HepG2 (cell line): ENCODE measurements at regions of chr9 and their contacts with region 1.

Region 1: DNA sequence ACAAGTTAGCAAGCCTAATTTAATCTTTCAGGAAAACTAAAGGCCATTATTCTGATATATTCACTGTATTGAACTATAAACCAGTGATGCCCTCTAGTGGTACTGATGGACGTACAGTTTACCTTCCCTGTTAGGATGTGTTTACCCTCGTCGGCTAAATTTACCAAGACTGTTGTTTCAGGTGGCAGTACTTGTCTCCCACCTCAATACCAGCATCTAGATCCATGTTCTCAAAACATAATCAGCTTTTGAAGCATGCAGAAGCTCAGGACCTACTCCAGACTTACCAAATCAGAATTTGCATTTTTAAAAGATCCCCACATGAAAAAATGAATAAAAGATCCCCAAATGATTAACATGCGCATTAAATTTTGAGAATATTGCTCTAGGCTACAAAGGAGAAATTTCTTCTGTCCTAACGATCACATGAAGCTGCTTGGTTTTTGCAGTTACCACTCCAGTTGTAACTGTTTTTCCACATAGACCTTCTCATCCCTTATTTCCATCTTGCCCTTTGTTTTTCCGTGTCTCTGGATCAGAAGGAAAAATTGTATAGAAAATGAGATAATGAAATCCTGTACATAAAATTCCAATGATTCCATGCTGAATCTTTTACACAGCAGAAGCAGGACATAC is 3.2 kb upstream of the BAAT start:
- DNase-seq: peak; percentile 86
- ATAC-seq: peak; percentile 97
- H3K4me3 ChIP-seq: no peak overlapping the region
- H3K27ac ChIP-seq: peak overlapping the region; percentile 41
- H3K4me1 ChIP-seq: peaks cover 81% of the 10 kb centered on the region
- H3K27me3 ChIP-seq: no peaks in the 10 kb centered on the region
- CTCF ChIP-seq: peak; percentile 88
- EP300 ChIP-seq: peak in 1 of 2 experiments; percentile 58; a peak in 1 of 4 replicates
- POLR2A ChIP-seq: no peak
- RAD21 ChIP-seq: peak; percentile 81

Region 2: GRCh38 chr9:100714372-100715099 is 673.5 kb before region 1 on chr9:
- CTCF ChIA-PET with region 1: no interaction called
- POLR2A ChIA-PET with region 1: no interaction called
- in situ Hi-C with region 1: no loop called
- intact Hi-C with region 1: loop called (anchors 1 kb)
- DNase-seq: peak; percentile 48
- ATAC-seq: peak; percentile 91
- H3K4me3 ChIP-seq: no peak overlapping the region
- H3K27ac ChIP-seq: no peak overlapping the region
- H3K4me1 ChIP-seq: no peaks in the 10 kb centered on the region
- H3K27me3 ChIP-seq: no peaks in the 10 kb centered on the region
- CTCF ChIP-seq: peak; percentile 82
- EP300 ChIP-seq: no peak
- POLR2A ChIP-seq: no peak
- RAD21 ChIP-seq: peak; percentile 37; the same call in 1 of the 2 replicates

Region 3: DNA sequence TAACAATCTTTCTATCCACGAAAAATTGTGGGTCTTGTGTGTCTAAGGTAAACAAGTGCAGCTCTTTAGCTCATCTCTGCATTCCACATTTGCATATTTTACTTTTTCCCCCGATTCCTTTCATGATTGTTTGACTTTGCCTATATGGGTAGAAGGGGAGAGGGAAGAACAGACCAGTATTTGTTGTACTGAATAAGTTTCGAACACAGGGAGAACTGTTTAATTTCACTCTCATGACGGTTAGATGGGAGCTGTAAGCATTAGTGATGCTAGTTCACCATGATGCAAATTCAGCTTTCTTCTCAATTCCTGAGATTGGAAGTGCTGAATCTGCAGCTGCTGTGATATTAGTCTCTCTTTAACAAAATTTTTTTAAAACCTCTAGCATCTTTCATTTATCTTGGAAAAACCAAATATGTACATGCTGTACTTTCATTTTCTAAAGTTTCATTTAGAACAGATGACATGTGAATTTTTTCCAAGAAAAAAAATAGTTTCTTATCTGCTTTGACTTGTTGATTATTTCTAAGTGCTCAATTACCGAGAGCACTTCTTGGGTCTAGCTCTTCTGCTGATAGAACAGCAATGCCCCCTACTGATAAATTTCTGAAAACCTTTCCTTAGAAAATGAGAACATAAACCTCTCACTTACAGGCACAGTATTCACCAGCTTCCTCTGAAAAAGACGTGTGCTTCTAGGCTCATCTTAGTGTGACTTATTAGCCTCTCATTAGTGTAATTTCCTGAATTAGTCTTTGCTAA is 152.7 kb before region 1 on chr9:
- CTCF ChIA-PET with region 1: interaction called, 4 read pairs
- POLR2A ChIA-PET with region 1: no interaction called
- in situ Hi-C with region 1: no loop called
- intact Hi-C with region 1: loop called (anchors 2 kb)
- DNase-seq: peak; percentile 45
- ATAC-seq: peak; percentile 81
- H3K4me3 ChIP-seq: no peak overlapping the region
- H3K27ac ChIP-seq: no peak overlapping the region
- H3K4me1 ChIP-seq: peaks cover 30% of the 10 kb centered on the region
- H3K27me3 ChIP-seq: no peaks in the 10 kb centered on the region
- CTCF ChIP-seq: peak; percentile 68
- EP300 ChIP-seq: no peak
- POLR2A ChIP-seq: no peak
- RAD21 ChIP-seq: peak; percentile 47

Region 4: DNA sequence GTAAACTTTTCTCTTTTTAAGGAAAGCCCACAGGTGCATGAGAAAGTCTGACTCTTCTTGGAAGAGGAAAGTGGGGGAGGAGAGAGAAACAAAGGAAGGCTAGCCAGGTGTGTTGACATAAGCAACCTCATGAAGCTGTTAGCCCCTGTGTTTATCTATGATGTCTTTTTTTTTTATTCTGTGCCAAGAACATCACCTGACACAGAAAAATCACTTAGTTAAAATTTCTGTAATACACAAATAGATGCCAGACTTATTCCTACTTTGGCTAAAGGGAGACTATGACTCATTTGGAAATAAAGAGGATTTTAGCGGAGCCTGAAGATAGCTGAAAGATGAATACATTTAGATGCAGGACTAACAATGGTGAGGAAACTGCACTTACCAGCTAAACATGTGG is 61.5 kb before region 1 on chr9:
- CTCF ChIA-PET with region 1: no interaction called
- POLR2A ChIA-PET with region 1: interaction called, 36 read pairs
- in situ Hi-C with region 1: loop called (anchors 5 kb)
- intact Hi-C with region 1: loop called (anchors 2 kb)
- DNase-seq: peak; percentile 16
- ATAC-seq: no peak
- H3K4me3 ChIP-seq: no peak overlapping the region
- H3K27ac ChIP-seq: peak overlapping the region; percentile 97
- H3K4me1 ChIP-seq: peaks cover 74% of the 10 kb centered on the region
- H3K27me3 ChIP-seq: no peaks in the 10 kb centered on the region
- CTCF ChIP-seq: no peak
- EP300 ChIP-seq: peak in 1 of 2 experiments; percentile 66; a peak in 1 of 4 replicates
- POLR2A ChIP-seq: peak in 1 of 2 experiments; percentile 48; a peak in 1 of 4 replicates
- RAD21 ChIP-seq: no peak

Region 5: DNA sequence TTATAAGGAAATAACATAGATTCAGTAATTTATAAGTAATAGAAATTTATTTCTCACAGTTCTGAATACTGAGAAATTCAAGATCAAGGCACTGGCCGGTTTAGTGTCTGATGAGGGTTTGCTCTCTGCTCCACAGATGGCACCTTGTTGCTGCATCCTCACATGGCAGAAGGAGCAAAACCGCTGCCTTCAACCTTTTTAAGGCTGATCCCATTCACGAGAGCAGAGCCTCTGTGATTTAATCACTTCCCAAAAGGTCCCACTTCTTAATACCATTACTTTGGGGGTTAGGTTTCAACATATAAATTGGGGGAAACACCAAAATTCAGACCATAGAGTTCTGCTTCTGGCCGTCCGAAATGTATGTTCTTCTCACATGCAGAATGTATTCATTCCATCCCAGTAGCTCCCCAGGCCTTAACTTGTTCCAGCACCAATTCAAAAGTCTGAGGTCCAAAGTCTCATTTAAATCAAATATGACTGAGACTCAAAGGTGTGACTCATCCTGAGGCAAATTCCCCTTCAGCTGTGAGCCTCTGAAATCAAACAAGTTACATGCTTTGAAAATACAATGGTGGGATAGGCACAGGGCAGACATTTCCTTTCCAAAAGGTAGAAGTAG is 33.7 kb before region 1 on chr9:
- CTCF ChIA-PET with region 1: interaction called, 3 read pairs
- POLR2A ChIA-PET with region 1: interaction called, 15 read pairs
- in situ Hi-C with region 1: no loop called
- intact Hi-C with region 1: loop called (anchors 1 kb)
- DNase-seq: peak; percentile 100
- ATAC-seq: peak; percentile 92
- H3K4me3 ChIP-seq: peak overlapping the region in 1 of 3 experiments; percentile 17; a peak in 1 of 6 replicates
- H3K27ac ChIP-seq: peak overlapping the region; percentile 94
- H3K4me1 ChIP-seq: peaks cover 95% of the 10 kb centered on the region
- H3K27me3 ChIP-seq: no peaks in the 10 kb centered on the region
- CTCF ChIP-seq: no peak
- EP300 ChIP-seq: peak; percentile 81 to 97
- POLR2A ChIP-seq: no peak
- RAD21 ChIP-seq: no peak; the same call in 1 of the 2 replicates

Region 6: GRCh38 chr9:101366038-101366756 is 21.8 kb before region 1 on chr9:
- CTCF ChIA-PET with region 1: no interaction called
- POLR2A ChIA-PET with region 1: interaction called, 4 read pairs
- in situ Hi-C with region 1: no loop called
- intact Hi-C with region 1: loop called (anchors 2 kb)
- DNase-seq: peak; percentile 91
- ATAC-seq: peak; percentile 92
- H3K4me3 ChIP-seq: peak overlapping the region in 2 of 3 experiments; percentile 42 to 46; a peak in 3 of 6 replicates
- H3K27ac ChIP-seq: peak overlapping the region; percentile 74
- H3K4me1 ChIP-seq: peaks cover 45% of the 10 kb centered on the region
- H3K27me3 ChIP-seq: no peaks in the 10 kb centered on the region
- CTCF ChIP-seq: no peak
- EP300 ChIP-seq: peak in 1 of 2 experiments; percentile 44; a peak in 1 of 4 replicates
- POLR2A ChIP-seq: peak in 1 of 2 experiments; percentile 41; a peak in 1 of 4 replicates
- RAD21 ChIP-seq: no peak

Region 7: GRCh38 chr9:101458955-101459631 is 71.1 kb after region 1 on chr9:
- CTCF ChIA-PET with region 1: interaction called, 9 read pairs
- POLR2A ChIA-PET with region 1: interaction called, 9 read pairs
- in situ Hi-C with region 1: no loop called
- intact Hi-C with region 1: loop called (anchors 1 kb)
- DNase-seq: peak; percentile 86
- ATAC-seq: peak; percentile 95
- H3K4me3 ChIP-seq: no peak overlapping the region
- H3K27ac ChIP-seq: no peak overlapping the region
- H3K4me1 ChIP-seq: peaks cover 52% of the 10 kb centered on the region
- H3K27me3 ChIP-seq: no peaks in the 10 kb centered on the region
- CTCF ChIP-seq: peak; percentile 91
- EP300 ChIP-seq: no peak
- POLR2A ChIP-seq: no peak
- RAD21 ChIP-seq: peak; percentile 80